ENCODE measurements at regions of chr20 and their contacts with region 1.

Region 1: DNA sequence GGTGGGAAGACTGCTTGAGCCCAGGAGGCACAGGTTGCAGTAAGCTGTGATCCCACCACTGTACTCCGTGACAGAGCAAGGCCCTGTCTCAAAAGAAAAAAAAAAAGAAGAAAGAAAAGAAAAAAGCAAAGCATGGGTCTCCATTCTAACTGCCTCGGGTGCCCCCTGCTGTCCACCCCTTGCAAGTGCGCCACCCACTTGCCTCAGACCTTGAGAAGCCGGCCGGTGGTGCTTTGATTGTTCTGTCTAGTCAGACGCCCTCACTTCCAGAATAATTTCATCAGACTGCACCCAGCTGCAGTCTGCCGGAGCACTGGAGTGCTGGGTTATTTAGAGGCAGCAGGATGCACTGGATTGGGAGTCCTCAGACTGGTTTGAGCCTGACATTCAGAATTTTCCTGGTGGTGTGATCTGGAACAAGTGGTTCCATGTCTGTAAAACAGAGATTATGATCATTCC is 17.6 kb upstream of the TM9SF4 start:
- DNase-seq: peak; percentile 67
- ATAC-seq: peak; percentile 83
- H3K4me3 ChIP-seq: no peak overlapping the region
- H3K27ac ChIP-seq: no peak overlapping the region
- H3K4me1 ChIP-seq: no peaks in the 10 kb centered on the region
- H3K27me3 ChIP-seq: peaks cover 3% of the 10 kb centered on the region; the same call in 1 of the 2 replicates
- CTCF ChIP-seq: peak; percentile 100

Region 2: GRCh38 chr20:31822421-31823330 is 269.2 kb before region 1 on chr20:
- CTCF ChIA-PET with region 1: no interaction called
- POLR2A ChIA-PET with region 1: no interaction called
- in situ Hi-C with region 1: no loop called
- intact Hi-C with region 1: loop called (anchors 5 kb)
- DNase-seq: no peak
- ATAC-seq: peak; percentile 89
- H3K4me3 ChIP-seq: peak overlapping the region; percentile 14 to 44
- H3K27ac ChIP-seq: no peak overlapping the region
- H3K4me1 ChIP-seq: peaks cover 12% of the 10 kb centered on the region
- H3K27me3 ChIP-seq: no peaks in the 10 kb centered on the region
- CTCF ChIP-seq: peak; percentile 100

Region 3: GRCh38 chr20:31863296-31864085 is 228.4 kb before region 1 on chr20:
- CTCF ChIA-PET with region 1: no interaction called
- POLR2A ChIA-PET with region 1: interaction called, 22 read pairs
- in situ Hi-C with region 1: no loop called
- intact Hi-C with region 1: no loop called
- DNase-seq: no peak
- ATAC-seq: no peak
- H3K4me3 ChIP-seq: no peak overlapping the region
- H3K27ac ChIP-seq: no peak overlapping the region
- H3K4me1 ChIP-seq: peaks cover 16% of the 10 kb centered on the region
- H3K27me3 ChIP-seq: no peaks in the 10 kb centered on the region
- CTCF ChIP-seq: no peak

Region 4: GRCh38 chr20:31951530-31952453 is 140.1 kb before region 1 on chr20 and contains the start of gene PDRG1:
- CTCF ChIA-PET with region 1: no interaction called
- POLR2A ChIA-PET with region 1: no interaction called
- in situ Hi-C with region 1: no loop called
- intact Hi-C with region 1: loop called (anchors 10 kb)
- DNase-seq: peak; percentile 93
- ATAC-seq: peak; percentile 99
- H3K4me3 ChIP-seq: peak within 1 kb of the TSS; percentile 79 to 97
- H3K27ac ChIP-seq: peak within 1 kb of the TSS; percentile 96
- H3K4me1 ChIP-seq: peaks cover 16% of the 10 kb centered on the region
- H3K27me3 ChIP-seq: no peaks in the 10 kb centered on the region
- CTCF ChIP-seq: peak; percentile 100
- total RNA-seq, gene PDRG1: 48.2 TPM

Region 5: DNA sequence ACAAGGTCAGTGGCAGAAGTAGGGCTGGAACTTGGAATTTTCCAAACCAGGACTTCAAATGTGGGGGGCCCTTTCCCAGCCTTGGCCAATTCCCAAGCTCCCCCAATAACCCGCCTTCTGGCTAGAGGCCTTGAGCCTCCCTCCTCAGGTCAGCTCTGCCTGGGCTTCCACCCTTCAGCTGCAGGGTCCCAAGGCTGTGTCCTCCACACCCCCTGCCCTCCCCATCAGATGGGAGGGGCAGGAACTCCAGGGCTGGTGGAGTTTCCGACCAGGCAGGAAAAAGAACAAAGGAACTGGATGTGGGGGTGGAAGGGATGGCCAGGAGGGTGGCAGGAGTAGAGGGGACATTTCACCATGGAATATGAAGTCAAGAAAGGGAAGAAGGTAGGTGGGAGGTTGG is 81.8 kb before region 1 on chr20 and contains the start of gene CCM2L:
- CTCF ChIA-PET with region 1: no interaction called
- POLR2A ChIA-PET with region 1: no interaction called
- in situ Hi-C with region 1: no loop called
- intact Hi-C with region 1: no loop called
- DNase-seq: no peak
- ATAC-seq: peak; percentile 40; the same call in 1 of the 2 replicates
- H3K4me3 ChIP-seq: no peak within 1 kb of the TSS
- H3K27ac ChIP-seq: peak within 1 kb of the TSS; percentile 62
- H3K4me1 ChIP-seq: peaks cover 29% of the 10 kb centered on the region
- H3K27me3 ChIP-seq: no peaks in the 10 kb centered on the region
- CTCF ChIP-seq: no peak
- total RNA-seq, gene CCM2L: 45.4 TPM

Region 6: DNA sequence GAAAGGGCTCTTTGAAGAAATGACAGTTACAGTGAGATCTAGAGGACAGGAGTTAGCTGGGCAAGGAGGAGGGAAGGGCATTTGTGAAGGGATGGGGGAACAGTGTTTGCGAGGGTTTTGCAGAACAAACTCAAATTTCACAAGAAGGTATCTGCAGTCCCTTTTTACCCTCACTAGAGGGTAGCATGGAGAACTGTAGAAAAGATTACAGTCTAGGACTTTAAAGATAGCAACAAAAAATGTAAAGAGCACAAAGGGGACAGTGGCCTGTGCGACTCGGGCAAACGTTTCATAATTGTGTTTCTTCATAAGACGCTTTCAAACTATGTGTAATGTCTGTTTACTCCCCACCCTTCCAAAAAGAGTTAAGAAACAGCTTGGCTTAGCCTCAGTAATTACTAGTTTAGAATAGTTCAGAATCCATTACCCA is 245.0 kb after region 1 on chr20:
- CTCF ChIA-PET with region 1: no interaction called
- POLR2A ChIA-PET with region 1: no interaction called
- in situ Hi-C with region 1: no loop called
- intact Hi-C with region 1: no loop called
- DNase-seq: peak; percentile 51
- ATAC-seq: peak; percentile 67
- H3K4me3 ChIP-seq: no peak overlapping the region
- H3K27ac ChIP-seq: no peak overlapping the region
- H3K4me1 ChIP-seq: no peaks in the 10 kb centered on the region
- H3K27me3 ChIP-seq: no peaks in the 10 kb centered on the region
- CTCF ChIP-seq: no peak